Esophagus squamous epithelium (tissue), 5 donors: ENCODE measurements at regions of chr13 and their contacts with region 1.

Region 1: GRCh38 chr13:27359199-27359821 is 65.1 kb upstream of the GTF3A start:
- DNase-seq: no peak
- H3K4me3 ChIP-seq: no peak overlapping the region
- H3K27ac ChIP-seq: no peak overlapping the region
- H3K4me1 ChIP-seq: peaks cover 0 to 13% (median 11%) of the 10 kb centered on the region in 3 donors
- H3K27me3 ChIP-seq: peaks cover 0 to 43% (median 0%) of the 10 kb centered on the region in 4 donors
- CTCF ChIP-seq: peak; percentile 64 to 80 (median 72)
- POLR2A ChIP-seq: no peak

Region 2: DNA sequence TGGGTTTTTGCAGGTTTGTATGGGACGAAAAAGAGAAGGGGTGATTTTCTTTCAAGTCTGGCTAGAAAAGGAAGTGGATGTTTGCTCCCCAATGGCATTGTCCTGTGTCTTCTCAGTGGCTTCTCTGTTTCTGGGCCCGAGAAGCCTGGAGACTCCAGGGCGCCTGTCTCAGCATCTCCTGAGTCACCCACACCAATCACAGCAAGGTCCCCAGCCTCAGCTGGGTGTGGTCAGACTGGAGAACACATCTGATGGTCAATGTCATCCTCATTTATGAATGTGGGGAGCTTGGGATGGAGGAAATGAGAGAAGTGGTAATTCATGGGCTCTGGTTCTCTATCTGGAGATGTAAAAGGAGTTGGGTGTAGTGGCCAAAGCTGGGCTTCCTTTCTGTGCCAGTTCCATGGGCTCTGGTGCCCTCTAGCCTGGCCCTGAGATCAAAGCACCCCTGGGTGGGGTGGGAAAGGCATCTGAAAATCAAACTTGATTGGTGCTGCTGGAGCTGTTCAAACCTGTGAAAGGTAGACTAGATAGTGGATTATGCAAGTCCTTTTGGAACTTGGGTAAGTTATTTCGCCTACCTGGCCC is 75.3 kb before region 1 on chr13:
- intact Hi-C with region 1: loop called (anchors 10 kb)
- DNase-seq: no peak
- H3K4me3 ChIP-seq: no peak overlapping the region
- H3K27ac ChIP-seq: no peak overlapping the region
- H3K4me1 ChIP-seq: no peaks in the 10 kb centered on the region
- H3K27me3 ChIP-seq: no peaks in the 10 kb centered on the region
- CTCF ChIP-seq: peak in 3 of 6 experiments; percentile 12 to 29 (median 18)
- POLR2A ChIP-seq: no peak